IMR-90 (cell line): ENCODE measurements at regions of chr15 and their contacts with region 1.

Region 1: DNA sequence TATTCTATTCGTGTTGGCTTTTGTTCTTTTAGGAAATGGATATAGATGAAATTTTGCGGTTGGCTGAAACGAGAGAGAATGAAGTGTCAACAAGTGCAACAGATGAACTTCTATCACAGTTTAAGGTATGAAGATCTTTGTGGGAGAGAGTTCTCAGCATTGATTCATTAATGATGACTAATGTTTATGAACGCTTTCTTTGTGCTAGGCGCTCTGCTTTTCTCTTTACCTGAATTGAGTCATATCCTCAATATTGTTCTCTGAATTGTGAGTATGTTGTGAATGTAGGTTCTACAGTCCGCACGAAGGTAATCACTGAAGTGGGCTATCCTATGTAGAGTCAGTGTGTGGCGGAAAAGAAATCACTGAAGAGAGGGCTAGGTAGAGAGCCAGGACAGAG is 81.2 kb downstream of the CHD2 start:
- DNase-seq: no peak
- ATAC-seq: no peak
- H3K4me3 ChIP-seq: no peak overlapping the region
- H3K27ac ChIP-seq: no peak overlapping the region
- H3K4me1 ChIP-seq: no peaks in the 10 kb centered on the region; the same call in 1 of the 2 replicates
- H3K27me3 ChIP-seq: no peaks in the 10 kb centered on the region
- CTCF ChIP-seq: no peak
- POLR2A ChIP-seq: no peak
- RAD21 ChIP-seq: no peak

Region 2: DNA sequence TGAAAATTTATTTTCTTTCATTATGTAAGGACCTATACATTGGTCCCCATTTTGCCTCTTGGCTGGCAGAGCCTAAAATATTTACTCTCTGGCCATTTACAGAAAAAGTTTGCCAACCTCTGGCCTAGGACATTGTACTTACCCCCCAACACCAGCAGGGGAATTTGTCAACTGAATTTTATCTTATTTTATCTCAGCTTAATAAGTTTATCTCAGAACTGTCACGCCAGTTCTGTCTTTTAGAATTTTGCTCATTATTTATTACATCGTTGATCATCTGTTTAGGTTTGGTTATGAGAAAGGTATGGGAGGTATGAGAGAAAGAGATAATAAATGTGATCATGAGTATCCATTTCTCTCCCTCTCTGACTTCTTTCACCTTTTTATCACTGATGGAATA is 42.9 kb before region 1 on chr15:
- CTCF ChIA-PET with region 1: no interaction called
- POLR2A ChIA-PET with region 1: no interaction called
- dilution Hi-C with region 1: no loop called
- in situ Hi-C with region 1: no loop called
- intact Hi-C with region 1: loop called (anchors 5 kb)
- DNase-seq: no peak
- ATAC-seq: no peak
- H3K4me3 ChIP-seq: no peak overlapping the region
- H3K27ac ChIP-seq: no peak overlapping the region
- H3K4me1 ChIP-seq: no peaks in the 10 kb centered on the region; the same call in 1 of the 2 replicates
- H3K27me3 ChIP-seq: no peaks in the 10 kb centered on the region
- CTCF ChIP-seq: 0 out of 2 replicates have a peak, but pooled peaks have one; percentile 8
- POLR2A ChIP-seq: no peak
- RAD21 ChIP-seq: no peak

Region 3: DNA sequence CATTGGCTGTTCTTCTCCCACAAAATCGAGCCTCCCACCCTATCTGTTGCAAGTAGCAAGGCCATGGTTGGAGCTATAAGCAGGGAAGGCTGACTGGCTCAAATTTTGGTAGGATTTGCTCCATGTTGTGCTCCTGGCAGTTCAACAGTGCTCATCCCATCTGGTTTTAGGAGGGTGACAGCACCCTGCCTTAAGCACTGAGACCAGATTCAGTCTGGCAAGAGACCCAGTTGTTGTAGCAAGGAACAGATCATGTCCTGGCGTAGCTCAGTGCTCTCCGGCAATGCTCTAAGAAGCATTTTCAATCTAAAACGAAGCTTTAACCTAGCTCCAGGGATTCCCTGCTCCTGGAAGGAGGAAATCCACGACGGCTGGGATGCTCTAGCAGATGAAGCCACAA is 16.5 kb after region 1 on chr15:
- CTCF ChIA-PET with region 1: no interaction called
- POLR2A ChIA-PET with region 1: no interaction called
- dilution Hi-C with region 1: no loop called
- in situ Hi-C with region 1: no loop called
- intact Hi-C with region 1: loop called (anchors 2 kb)
- DNase-seq: no peak
- ATAC-seq: no peak
- H3K4me3 ChIP-seq: no peak overlapping the region
- H3K27ac ChIP-seq: no peak overlapping the region
- H3K4me1 ChIP-seq: no peaks in the 10 kb centered on the region
- H3K27me3 ChIP-seq: no peaks in the 10 kb centered on the region
- CTCF ChIP-seq: no peak
- POLR2A ChIP-seq: no peak
- RAD21 ChIP-seq: no peak

Region 4: DNA sequence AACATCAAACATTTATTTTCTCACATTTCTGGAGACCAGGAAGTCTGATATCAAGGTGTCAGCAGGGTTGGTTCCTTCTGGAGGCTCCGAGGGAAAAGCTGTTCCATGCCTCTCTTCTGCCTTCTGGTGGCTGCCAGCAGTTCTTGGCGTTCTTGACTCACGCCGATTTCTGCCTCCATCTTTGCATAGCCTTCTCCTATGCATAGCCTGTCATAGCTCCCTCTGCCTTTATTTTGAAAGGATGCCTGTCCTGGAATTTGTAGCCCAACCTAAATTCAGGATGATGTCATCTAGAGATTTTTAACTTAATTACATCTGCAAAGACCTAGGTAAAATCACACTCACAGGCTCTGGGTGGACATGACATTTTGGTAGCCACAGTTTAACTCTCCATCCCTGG is 37.2 kb after region 1 on chr15:
- CTCF ChIA-PET with region 1: no interaction called
- POLR2A ChIA-PET with region 1: no interaction called
- dilution Hi-C with region 1: no loop called
- in situ Hi-C with region 1: no loop called
- intact Hi-C with region 1: loop called (anchors 5 kb)
- DNase-seq: no peak
- ATAC-seq: no peak
- H3K4me3 ChIP-seq: no peak overlapping the region
- H3K27ac ChIP-seq: no peak overlapping the region
- H3K4me1 ChIP-seq: no peaks in the 10 kb centered on the region
- H3K27me3 ChIP-seq: no peaks in the 10 kb centered on the region
- CTCF ChIP-seq: 0 out of 2 replicates have a peak, but pooled peaks have one; percentile 18
- POLR2A ChIP-seq: no peak
- RAD21 ChIP-seq: no peak

Region 5: DNA sequence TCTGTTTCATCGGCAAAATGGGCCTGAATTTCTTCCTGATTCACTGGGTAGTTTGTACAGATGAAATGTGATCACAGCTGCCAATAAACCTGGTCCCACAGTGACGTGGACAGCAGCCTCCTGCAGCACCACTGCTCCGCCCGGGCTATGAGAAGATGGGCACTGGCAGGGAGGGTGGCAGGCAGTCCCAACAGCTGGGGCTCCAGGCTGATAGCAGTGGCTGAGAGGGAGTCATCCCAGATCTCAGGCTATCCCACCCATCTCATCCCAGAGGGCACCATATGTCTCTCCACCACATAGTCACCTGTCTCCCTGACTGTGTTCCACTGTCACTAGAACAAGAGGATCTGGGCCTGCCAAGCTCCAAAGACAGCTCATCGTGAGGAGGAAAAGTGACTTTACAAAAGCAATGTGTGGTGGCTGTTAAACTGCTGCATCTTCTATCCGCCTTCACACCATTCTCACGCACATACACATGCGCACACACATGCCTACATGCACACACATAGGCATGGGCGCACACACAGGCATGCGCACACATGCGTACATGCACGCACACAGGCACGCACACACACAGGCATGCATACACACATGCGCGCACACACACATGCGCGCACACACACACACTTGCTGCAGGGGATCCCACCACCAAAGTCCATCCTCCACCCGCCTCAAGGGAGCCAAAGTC is 61.5 kb after region 1 on chr15:
- CTCF ChIA-PET with region 1: no interaction called
- POLR2A ChIA-PET with region 1: no interaction called
- dilution Hi-C with region 1: no loop called
- in situ Hi-C with region 1: no loop called
- intact Hi-C with region 1: no loop called
- DNase-seq: no peak
- ATAC-seq: no peak
- H3K4me3 ChIP-seq: no peak overlapping the region
- H3K27ac ChIP-seq: no peak overlapping the region
- H3K4me1 ChIP-seq: no peaks in the 10 kb centered on the region
- H3K27me3 ChIP-seq: no peaks in the 10 kb centered on the region; the same call in 1 of the 2 replicates
- CTCF ChIP-seq: no peak
- POLR2A ChIP-seq: no peak
- RAD21 ChIP-seq: no peak

Region 6: DNA sequence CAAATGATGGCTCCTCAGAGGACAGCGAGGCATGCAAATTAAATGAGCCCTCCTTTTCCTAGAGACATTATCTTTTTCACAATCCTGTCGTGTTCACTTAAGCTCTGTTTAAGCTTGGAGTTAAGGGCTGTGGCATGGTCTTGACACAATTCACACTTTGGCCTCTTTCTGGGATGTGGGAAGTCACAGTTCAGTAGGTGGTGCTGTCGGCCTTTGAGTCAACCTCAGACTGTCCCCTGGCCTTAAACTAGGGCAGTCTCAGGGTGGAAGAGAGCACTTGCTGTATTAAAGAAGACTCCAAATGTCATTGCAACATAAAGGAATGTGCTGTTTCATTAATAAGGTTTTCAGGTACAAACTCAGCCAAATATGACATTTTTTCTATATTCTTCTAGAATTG is 1601.0 kb after region 1 on chr15:
- CTCF ChIA-PET with region 1: no interaction called
- POLR2A ChIA-PET with region 1: no interaction called
- dilution Hi-C with region 1: no loop called
- in situ Hi-C with region 1: no loop called
- intact Hi-C with region 1: no loop called
- DNase-seq: no peak
- ATAC-seq: no peak
- H3K4me3 ChIP-seq: no peak overlapping the region
- H3K27ac ChIP-seq: no peak overlapping the region
- H3K4me1 ChIP-seq: no peaks in the 10 kb centered on the region
- H3K27me3 ChIP-seq: no peaks in the 10 kb centered on the region
- CTCF ChIP-seq: no peak
- POLR2A ChIP-seq: no peak
- RAD21 ChIP-seq: no peak